HEK293T (cell line): ENCODE measurements at regions of chr1 and their contacts with region 1.

Region 1: DNA sequence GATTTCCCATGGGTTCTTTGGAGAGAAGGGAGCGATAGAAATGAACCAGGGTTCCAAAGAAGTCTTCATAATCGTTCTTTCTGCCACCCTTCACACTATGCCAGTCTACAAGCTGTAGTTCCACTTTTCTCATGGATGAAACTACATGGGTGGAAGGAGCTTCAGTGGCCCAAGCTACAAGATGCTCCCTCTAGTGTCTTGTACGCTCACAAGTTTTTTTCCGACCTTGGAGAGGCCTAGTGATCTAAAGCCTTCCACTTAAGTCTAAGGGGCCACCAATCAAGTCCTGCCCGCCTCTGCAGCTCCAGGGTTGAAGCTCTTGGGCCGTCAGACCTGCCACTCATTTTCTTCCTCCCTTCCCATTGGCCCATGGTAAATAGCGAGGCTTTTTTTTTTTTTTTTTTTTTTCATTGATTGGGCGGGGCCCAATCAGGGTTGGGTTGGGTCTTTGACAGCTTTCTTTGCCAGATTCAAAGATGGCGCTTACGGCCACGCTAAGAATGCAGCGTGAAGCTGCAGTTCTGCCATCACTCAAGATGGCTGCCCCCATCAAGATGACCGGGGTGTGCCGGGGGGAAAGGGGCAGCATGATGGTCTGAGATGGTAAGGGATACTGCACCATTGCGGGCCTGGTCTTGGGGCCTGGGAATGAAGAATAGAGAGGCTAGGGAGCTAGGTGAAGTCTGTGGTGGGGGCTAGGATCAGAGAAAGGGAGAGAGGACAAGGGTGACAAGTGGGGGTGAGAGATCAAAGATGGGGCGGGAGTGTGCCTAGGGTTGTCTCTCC is at the start of gene TOMM40L:
- DNase-seq: peak; percentile 99

Region 2: DNA sequence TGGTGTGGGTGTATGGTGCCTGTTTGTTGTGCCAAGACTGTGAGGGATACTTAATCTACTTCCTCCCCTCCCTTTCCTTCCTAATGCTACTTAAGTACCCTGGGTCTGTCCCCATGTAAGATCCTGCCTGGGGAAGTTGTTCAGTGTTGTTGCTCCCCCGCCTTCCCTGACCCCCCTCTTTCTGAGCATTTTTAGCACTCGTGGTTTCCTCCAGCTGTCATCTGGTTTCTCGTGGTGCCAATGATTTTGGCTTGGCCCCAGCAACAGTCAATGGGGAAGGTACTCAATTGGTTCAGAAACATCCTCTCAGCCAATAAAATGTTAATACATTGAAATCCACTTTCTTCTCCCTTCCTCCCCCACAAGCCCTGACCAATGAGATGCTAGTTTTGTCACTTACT is 40.4 kb before region 1 on chr1:
- CTCF ChIA-PET with region 1: no interaction called
- POLR2A ChIA-PET with region 1: no interaction called
- DNase-seq: no peak

Region 3: GRCh38 chr1:161201828-161202725 is 23.6 kb before region 1 on chr1 and contains the start of gene NDUFS2:
- CTCF ChIA-PET with region 1: interaction called, 9 read pairs
- POLR2A ChIA-PET with region 1: interaction called, 25 read pairs
- DNase-seq: peak; percentile 98

Region 4: DNA sequence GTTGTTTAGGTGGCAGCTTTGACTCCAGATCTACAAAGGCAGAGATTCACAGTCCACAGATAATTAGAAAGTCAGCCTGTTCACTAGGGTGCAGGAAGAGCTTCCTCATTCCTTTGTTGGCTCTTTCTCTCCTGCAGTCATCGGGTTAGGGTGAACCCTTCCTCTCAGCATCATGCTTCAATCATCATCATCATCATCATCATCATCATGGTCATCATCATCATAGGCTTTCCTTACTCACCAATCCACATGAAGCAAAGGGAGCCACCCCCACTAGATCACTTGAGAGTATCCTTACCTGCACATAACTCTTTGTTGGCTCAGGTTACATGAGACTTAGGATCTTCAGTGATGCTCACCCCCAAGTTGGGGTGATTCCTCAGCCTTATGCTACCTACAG is 65.1 kb after region 1 on chr1:
- CTCF ChIA-PET with region 1: interaction called, 10 read pairs
- POLR2A ChIA-PET with region 1: interaction called, 4 read pairs
- DNase-seq: no peak

Region 5: GRCh38 chr1:161382214-161383019 is 156.7 kb after region 1 on chr1:
- CTCF ChIA-PET with region 1: interaction called, 10 read pairs
- POLR2A ChIA-PET with region 1: interaction called, 4 read pairs
- DNase-seq: peak; percentile 54